Activated CD8-positive, alpha-beta T cell treated with anti-CD3 and anti-CD28 coated beads, Interleukin-2, amount 10 ng/mL, durations not matched to agents 7 days and 5 days (primary cell): ENCODE measurements at regions of chr5 and their contacts with region 1.

Region 1: DNA sequence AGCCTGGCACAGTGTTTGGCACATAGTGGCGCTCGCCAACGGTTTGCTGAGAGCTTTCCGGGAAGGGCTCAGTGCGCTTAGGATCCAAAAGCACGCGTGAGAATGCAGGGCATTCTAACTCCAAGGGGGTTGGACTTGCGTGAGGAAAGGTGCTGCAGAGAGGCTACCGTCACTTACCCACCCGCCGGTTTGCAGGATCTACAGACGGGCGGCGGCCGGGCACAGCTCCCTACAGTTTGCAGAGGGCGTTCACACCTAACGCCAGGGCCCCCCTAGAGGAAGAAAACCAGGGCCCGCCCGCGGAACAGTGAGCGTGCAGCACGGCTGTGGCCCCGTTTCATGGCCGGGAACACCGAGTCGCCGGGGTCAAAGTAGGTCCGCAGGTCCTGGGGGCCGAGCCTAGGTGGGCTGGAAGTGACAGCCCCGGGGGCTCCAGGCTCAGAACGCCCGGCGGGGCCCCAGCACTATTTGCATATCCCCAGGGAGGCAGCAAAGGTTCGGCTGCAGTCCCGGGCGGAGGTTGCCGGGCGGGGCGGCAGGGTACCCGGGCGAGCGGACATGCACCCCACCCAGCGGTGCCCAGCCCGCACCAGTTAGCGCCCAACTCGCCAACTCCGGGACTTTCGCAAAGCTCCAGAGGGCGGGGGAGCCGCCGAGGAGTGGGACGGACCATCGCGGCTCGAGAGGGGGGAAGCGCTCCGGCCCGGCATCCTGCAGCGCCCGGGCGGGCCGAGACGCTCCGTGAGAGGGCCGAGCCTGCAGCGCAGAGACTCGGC is 526 bp upstream of the GALNT10 start:
- DNase-seq: peak; percentile 85
- ATAC-seq: peak; percentile 82
- H3K4me3 Mint-ChIP-seq: peak overlapping the region; percentile 80
- H3K27ac Mint-ChIP-seq: peak overlapping the region; percentile 76
- H3K4me1 Mint-ChIP-seq: peaks cover 31% of the 10 kb centered on the region
- H3K27me3 Mint-ChIP-seq: peaks cover 24% of the 10 kb centered on the region

Region 2: GRCh38 chr5:154038707-154039457 is 151.1 kb before region 1 on chr5 and contains the starts of genes FAM114A2 and MFAP3:
- CTCF ChIA-PET with region 1: interaction called, 3 read pairs
- POLR2A ChIA-PET with region 1: interaction called, 11 read pairs
- DNase-seq: peak; percentile 93
- ATAC-seq: peak; percentile 100
- H3K4me3 Mint-ChIP-seq: peak within 1 kb of the TSS; percentile 87
- H3K27ac Mint-ChIP-seq: peak within 1 kb of the TSS; percentile 97
- H3K4me1 Mint-ChIP-seq: peaks cover 47% of the 10 kb centered on the region
- H3K27me3 Mint-ChIP-seq: no peaks in the 10 kb centered on the region
- total RNA-seq, gene FAM114A2: 17.8 to 23.1 TPM
- total RNA-seq, gene MFAP3: 21.0 to 23.0 TPM

Region 3: DNA sequence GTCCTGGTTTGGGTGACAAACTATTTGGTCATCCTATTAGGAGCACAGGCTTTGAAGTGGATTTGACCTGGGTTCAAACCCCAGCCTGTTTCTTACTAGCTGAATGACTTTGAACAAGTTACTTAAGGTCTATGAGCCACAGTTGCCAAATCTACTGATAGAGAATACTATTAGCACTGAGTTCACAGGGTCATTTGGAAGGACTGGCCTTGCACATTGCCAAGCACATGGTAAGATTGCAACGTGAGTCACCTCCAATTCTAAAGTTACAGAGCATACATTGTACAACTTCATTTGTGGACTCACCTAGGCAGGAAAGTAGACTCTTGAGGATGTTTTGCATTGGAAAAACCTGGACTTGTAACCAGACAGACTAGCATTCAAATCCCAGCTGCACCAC is 112.3 kb before region 1 on chr5:
- CTCF ChIA-PET with region 1: interaction called, 153 read pairs
- POLR2A ChIA-PET with region 1: interaction called, 20 read pairs
- DNase-seq: no peak
- ATAC-seq: no peak
- H3K4me3 Mint-ChIP-seq: no peak overlapping the region
- H3K27ac Mint-ChIP-seq: no peak overlapping the region
- H3K4me1 Mint-ChIP-seq: peaks cover 43% of the 10 kb centered on the region
- H3K27me3 Mint-ChIP-seq: no peaks in the 10 kb centered on the region

Region 4: DNA sequence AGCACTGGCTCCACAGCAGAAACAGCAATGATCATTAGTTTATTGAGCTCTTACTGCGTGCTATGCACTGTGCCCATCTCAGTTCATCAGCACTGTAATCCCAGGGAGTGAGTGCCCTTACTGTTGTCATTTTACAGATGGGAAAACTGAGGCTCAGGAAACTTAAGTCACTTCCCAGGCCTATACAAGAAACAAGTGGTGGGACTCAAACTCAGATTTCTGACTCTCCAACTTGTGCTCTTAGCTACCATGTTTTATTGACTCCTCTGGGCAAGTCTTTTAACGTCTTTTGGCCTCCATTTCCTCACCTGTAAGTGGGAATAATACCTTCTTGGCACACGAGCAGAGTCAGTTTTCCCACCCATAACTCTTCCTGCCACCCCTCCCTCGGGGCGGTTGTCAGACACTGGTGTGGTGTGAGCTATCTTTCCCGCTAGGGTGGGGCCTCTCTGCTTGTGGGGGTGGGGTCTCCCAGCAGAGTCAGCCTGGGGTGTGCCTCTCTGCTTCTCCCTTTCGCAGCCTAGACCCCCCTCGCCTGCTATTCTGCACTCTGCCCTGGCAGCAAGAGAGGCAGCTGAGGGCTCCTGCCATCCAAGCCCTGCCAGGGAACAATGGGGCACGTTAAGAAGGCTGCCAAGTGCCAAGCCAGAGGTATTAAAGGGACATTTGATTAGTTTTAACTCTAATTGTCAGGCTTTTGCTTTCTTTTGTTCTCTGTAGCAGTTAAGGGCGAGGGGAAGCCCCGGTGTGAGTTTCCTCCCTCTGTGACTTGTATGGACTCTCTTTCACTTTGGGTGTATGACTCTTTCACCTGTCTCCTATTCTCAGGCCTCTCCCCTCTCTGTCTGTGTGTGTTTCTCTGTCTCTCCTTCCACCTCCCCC is 12.6 kb after region 1 on chr5:
- CTCF ChIA-PET with region 1: interaction called, 15 read pairs
- POLR2A ChIA-PET with region 1: interaction called, 21 read pairs
- DNase-seq: peak; percentile 60
- ATAC-seq: peak; percentile 64
- H3K4me3 Mint-ChIP-seq: peak overlapping the region; percentile 48
- H3K27ac Mint-ChIP-seq: peak overlapping the region; percentile 82
- H3K4me1 Mint-ChIP-seq: peaks cover 58% of the 10 kb centered on the region
- H3K27me3 Mint-ChIP-seq: no peaks in the 10 kb centered on the region

Region 5: GRCh38 chr5:154221371-154221896 is 31.4 kb after region 1 on chr5:
- CTCF ChIA-PET with region 1: interaction called, 7 read pairs
- POLR2A ChIA-PET with region 1: interaction called, 11 read pairs
- DNase-seq: peak; percentile 75
- ATAC-seq: peak; percentile 97
- H3K4me3 Mint-ChIP-seq: peak overlapping the region; percentile 1
- H3K27ac Mint-ChIP-seq: peak overlapping the region; percentile 75
- H3K4me1 Mint-ChIP-seq: peaks cover 39% of the 10 kb centered on the region
- H3K27me3 Mint-ChIP-seq: no peaks in the 10 kb centered on the region

Region 6: GRCh38 chr5:154238776-154239481 is 48.9 kb after region 1 on chr5:
- CTCF ChIA-PET with region 1: interaction called, 34 read pairs
- POLR2A ChIA-PET with region 1: interaction called, 10 read pairs
- DNase-seq: no peak
- ATAC-seq: no peak
- H3K4me3 Mint-ChIP-seq: no peak overlapping the region
- H3K27ac Mint-ChIP-seq: no peak overlapping the region
- H3K4me1 Mint-ChIP-seq: peaks cover 22% of the 10 kb centered on the region
- H3K27me3 Mint-ChIP-seq: no peaks in the 10 kb centered on the region

Region 7: GRCh38 chr5:154405078-154405792 is 215.2 kb after region 1 on chr5:
- CTCF ChIA-PET with region 1: interaction called, 16 read pairs
- POLR2A ChIA-PET with region 1: interaction called, 5 read pairs
- DNase-seq: peak; percentile 81
- ATAC-seq: peak; percentile 99
- H3K4me3 Mint-ChIP-seq: peak overlapping the region; percentile 48
- H3K27ac Mint-ChIP-seq: no peak overlapping the region
- H3K4me1 Mint-ChIP-seq: peaks cover 12% of the 10 kb centered on the region
- H3K27me3 Mint-ChIP-seq: no peaks in the 10 kb centered on the region